ENCODE measurements at regions of chr10 and their contacts with region 1.

Region 1: GRCh38 chr10:71812016-71812912 is 38.8 kb downstream of the PSAP start:
- DNase-seq: peak; percentile 64 to 83 (median 76)
- H3K4me3 ChIP-seq: no peak overlapping the region
- H3K27ac ChIP-seq: no peak overlapping the region
- H3K4me1 ChIP-seq: no peaks in the 10 kb centered on the region
- H3K27me3 ChIP-seq: no peaks in the 10 kb centered on the region
- CTCF ChIP-seq: peak; percentile 31 to 80 (median 66)
- EP300 ChIP-seq: no peak
- POLR2A ChIP-seq: peak; percentile 16

Region 2: DNA sequence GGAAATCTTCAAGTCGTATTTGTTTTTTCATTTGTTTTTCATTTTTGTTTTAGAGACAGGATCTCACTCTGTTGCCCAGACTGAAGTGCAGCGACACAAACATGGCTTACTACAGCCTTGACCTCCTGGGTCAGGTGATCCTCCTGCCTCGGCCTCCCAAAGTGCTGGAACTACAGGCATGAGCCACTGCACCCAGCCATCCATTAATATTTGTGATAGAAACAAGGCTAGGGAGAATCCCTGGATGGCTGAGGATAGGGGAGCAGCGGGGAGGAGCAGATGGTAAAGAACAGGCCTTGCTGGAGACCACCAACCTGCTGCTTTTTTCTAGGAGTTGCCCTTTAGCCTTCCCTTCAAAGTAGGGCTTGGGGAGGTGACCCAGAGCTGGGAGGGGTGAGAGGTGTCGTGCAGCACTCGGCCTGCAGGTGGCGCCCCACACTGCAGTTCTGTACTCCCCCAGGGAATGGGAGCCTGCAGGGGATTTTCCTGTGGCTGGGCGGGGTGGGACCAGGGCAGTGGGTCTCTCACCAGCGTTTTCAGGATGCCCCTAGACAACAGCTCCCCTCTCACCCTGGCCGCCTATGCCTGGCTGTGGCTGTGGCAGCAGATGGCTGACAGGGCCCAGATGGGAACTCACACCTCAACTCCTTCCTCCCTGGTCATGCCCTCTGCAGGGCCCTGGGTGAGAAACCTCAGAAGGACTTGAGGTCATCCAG is 428.1 kb before region 1 on chr10:
- intact Hi-C with region 1: loop called in 1 of 4 experiments (anchors 10 kb)
- DNase-seq: peak; percentile 55 to 84 (median 77)
- H3K4me3 ChIP-seq: no peak overlapping the region
- H3K27ac ChIP-seq: no peak overlapping the region
- H3K4me1 ChIP-seq: no peaks in the 10 kb centered on the region
- H3K27me3 ChIP-seq: no peaks in the 10 kb centered on the region
- CTCF ChIP-seq: peak; percentile 62 to 90 (median 83)
- EP300 ChIP-seq: no peak
- POLR2A ChIP-seq: no peak

Region 3: DNA sequence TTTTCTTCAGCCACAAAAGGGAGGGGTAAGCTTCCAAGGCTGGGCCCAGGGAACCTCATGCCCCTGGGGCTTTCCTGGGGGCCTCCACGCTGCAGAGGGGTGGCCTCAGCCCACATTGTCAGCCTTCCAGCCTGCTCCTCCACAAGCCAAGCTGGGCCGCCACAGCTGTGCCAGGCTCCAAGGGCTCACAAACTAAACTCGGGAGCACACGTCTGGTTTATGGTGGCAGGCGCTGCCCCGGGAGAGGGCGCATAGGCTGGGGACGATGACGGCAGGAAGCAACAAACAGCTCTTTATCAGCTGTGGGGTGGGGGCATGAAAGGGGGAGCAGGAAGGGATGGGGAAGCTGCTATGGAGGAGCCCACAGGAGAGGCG is 421.8 kb before region 1 on chr10:
- intact Hi-C with region 1: loop called in 2 of 4 experiments (anchors 5 to 10 kb)
- DNase-seq: peak in 1 of 5 donors; percentile 11
- H3K4me3 ChIP-seq: no peak overlapping the region
- H3K27ac ChIP-seq: no peak overlapping the region
- H3K4me1 ChIP-seq: no peaks in the 10 kb centered on the region
- H3K27me3 ChIP-seq: no peaks in the 10 kb centered on the region
- CTCF ChIP-seq: no peak
- EP300 ChIP-seq: no peak
- POLR2A ChIP-seq: no peak

Region 4: GRCh38 chr10:71613261-71613777 is 198.9 kb before region 1 on chr10:
- intact Hi-C with region 1: no loop called
- DNase-seq: no peak
- H3K4me3 ChIP-seq: no peak overlapping the region
- H3K27ac ChIP-seq: no peak overlapping the region
- H3K4me1 ChIP-seq: no peaks in the 10 kb centered on the region
- H3K27me3 ChIP-seq: no peaks in the 10 kb centered on the region
- CTCF ChIP-seq: no peak
- EP300 ChIP-seq: no peak
- POLR2A ChIP-seq: no peak

Region 5: DNA sequence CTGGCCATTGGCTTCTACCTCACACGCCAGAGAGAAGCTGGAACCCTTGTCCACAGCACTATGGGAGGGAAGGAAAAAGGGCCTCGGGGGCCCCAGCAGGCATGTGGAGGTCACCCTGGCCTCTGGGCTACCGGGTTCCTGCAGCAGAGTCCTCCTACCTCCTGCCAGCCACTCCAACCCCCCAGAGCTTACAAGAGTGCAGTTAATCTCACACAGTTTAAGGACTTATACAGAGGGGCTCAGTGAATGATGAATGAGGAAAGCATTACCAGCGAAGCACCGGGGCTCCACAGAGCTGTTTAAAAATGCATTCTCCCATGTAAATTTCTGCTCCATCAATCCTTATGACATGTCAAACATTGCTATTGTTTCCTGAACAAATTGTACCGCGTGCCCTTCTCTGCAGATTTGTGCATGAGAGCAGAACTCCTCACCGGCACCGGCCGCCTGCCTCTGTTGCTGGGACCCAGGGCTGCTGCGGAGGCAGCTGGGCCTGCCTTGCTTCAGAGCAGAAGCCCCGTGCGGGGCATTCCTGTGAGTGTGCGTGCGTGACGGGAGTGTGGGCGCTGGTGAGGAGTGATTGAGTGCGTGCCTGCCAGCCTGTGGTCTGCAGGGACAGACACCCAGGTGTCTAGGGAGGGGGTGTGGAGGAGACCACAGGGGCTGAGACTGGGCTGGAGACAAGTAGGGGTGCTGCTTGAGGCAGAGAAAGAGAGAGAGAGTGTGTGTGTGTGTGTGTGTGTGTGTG is 145.5 kb before region 1 on chr10:
- intact Hi-C with region 1: no loop called
- DNase-seq: no peak
- H3K4me3 ChIP-seq: no peak overlapping the region
- H3K27ac ChIP-seq: no peak overlapping the region
- H3K4me1 ChIP-seq: no peaks in the 10 kb centered on the region
- H3K27me3 ChIP-seq: no peaks in the 10 kb centered on the region
- CTCF ChIP-seq: no peak
- EP300 ChIP-seq: no peak
- POLR2A ChIP-seq: no peak